HepG2 (cell line): ENCODE measurements at regions of chr14 and their contacts with region 1.

Region 1: GRCh38 chr14:22852940-22853767 is 16.8 kb downstream of the MMP14 start:
- DNase-seq: peak; percentile 86
- ATAC-seq: peak; percentile 88
- H3K4me3 ChIP-seq: peak overlapping the region; percentile 43 to 80 (median 57)
- H3K27ac ChIP-seq: no peak overlapping the region
- H3K4me1 ChIP-seq: peaks cover 42% of the 10 kb centered on the region
- H3K27me3 ChIP-seq: peaks cover 7 to 30% of the 10 kb centered on the region in 2 experiments; a peak in 4 of 5 replicates
- CTCF ChIP-seq: peak; percentile 98
- EP300 ChIP-seq: no peak
- POLR2A ChIP-seq: no peak
- RAD21 ChIP-seq: peak; percentile 100

Region 2: DNA sequence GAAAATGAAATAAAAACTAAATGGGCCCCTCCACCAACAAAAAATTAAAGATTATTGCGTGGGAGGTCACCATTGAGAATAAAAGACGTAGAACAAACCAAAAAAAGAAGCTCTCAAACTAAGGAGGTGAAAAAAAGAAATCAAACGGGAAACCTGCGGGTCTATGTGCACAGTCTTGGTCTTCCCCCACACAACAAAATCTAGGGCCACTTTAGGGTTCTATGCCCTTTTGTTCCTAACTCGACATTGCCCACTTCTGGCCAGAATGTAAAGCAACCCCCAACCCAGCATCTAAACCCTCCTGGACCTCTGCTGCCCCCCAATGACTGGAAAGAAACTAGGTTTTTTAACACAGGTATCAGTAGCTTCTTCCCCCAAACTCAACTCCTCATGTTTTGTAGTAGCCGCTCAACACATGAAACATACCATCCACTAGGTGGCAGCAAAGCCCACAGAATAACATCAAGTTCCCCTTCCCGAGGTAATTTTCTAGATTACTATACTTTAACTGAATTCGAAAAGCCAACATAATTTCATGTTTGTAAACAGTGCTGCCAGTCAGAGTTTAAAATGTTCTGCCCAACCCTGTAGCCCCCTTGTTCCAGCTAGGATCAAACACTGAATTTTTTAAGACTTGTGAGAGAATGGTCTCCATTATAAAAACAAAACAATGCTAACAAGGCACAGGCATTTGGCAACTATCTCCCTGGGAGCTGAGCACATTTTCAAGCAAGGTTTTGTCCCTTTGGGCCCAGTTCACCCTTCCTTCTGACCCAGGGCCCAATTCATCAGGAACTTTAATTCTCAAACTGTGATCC is 282.8 kb before region 1 on chr14:
- CTCF ChIA-PET with region 1: interaction called, 58 read pairs
- POLR2A ChIA-PET with region 1: interaction called, 3 read pairs
- in situ Hi-C with region 1: no loop called
- intact Hi-C with region 1: loop called (anchors 1 kb)
- DNase-seq: peak; percentile 98
- ATAC-seq: peak; percentile 86
- H3K4me3 ChIP-seq: no peak overlapping the region
- H3K27ac ChIP-seq: peak overlapping the region; percentile 12
- H3K4me1 ChIP-seq: peaks cover 29% of the 10 kb centered on the region
- H3K27me3 ChIP-seq: no peaks in the 10 kb centered on the region
- CTCF ChIP-seq: peak; percentile 97
- EP300 ChIP-seq: no peak; a peak in 1 of 4 replicates
- POLR2A ChIP-seq: no peak
- RAD21 ChIP-seq: peak; percentile 96

Region 3: DNA sequence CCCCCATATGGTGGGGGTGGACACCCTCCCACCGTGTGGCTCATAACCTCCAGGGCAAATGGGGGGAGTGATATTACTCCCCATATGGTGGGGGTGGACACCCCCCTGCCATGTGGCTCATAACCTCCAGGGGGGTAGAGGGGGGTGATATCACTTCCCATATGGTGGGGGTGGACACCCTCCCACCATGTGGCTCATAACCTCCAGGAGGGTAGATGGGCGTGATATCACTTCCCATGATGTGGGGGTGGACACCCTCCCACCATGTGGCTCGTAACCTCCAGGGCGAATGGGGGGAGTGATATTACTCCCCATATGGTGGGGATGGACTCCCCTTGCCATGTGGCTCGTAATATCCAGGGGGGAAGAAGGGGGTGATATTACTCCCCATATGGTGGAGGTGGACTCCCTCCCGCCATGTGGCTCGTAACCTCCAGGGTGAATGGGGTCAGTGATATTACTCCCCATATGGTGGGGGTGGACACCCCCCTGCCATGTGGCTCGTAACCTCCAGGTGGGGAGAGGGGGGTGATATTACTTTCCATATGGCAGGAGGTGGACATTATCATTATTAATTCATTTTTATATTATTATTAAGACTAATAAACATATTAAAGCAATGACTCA is 137.9 kb before region 1 on chr14:
- CTCF ChIA-PET with region 1: interaction called, 3 read pairs
- POLR2A ChIA-PET with region 1: no interaction called
- in situ Hi-C with region 1: no loop called
- intact Hi-C with region 1: loop called (anchors 2 kb)
- DNase-seq: no peak
- ATAC-seq: no peak; the same call in 2 of the 3 replicates
- H3K4me3 ChIP-seq: no peak overlapping the region
- H3K27ac ChIP-seq: no peak overlapping the region
- H3K4me1 ChIP-seq: peaks cover 13% of the 10 kb centered on the region
- H3K27me3 ChIP-seq: peaks cover 0 to 13% of the 10 kb centered on the region in 2 experiments; a peak in 1 of 5 replicates
- CTCF ChIP-seq: no peak
- EP300 ChIP-seq: no peak
- POLR2A ChIP-seq: no peak
- RAD21 ChIP-seq: no peak

Region 4: GRCh38 chr14:22802860-22803686 is 50.1 kb before region 1 on chr14:
- CTCF ChIA-PET with region 1: no interaction called
- POLR2A ChIA-PET with region 1: no interaction called
- in situ Hi-C with region 1: no loop called
- intact Hi-C with region 1: loop called (anchors 1 kb)
- DNase-seq: no peak
- ATAC-seq: no peak
- H3K4me3 ChIP-seq: no peak overlapping the region
- H3K27ac ChIP-seq: no peak overlapping the region
- H3K4me1 ChIP-seq: peaks cover 18% of the 10 kb centered on the region
- H3K27me3 ChIP-seq: no peaks in the 10 kb centered on the region
- CTCF ChIP-seq: no peak
- EP300 ChIP-seq: no peak
- POLR2A ChIP-seq: no peak
- RAD21 ChIP-seq: no peak

Region 5: DNA sequence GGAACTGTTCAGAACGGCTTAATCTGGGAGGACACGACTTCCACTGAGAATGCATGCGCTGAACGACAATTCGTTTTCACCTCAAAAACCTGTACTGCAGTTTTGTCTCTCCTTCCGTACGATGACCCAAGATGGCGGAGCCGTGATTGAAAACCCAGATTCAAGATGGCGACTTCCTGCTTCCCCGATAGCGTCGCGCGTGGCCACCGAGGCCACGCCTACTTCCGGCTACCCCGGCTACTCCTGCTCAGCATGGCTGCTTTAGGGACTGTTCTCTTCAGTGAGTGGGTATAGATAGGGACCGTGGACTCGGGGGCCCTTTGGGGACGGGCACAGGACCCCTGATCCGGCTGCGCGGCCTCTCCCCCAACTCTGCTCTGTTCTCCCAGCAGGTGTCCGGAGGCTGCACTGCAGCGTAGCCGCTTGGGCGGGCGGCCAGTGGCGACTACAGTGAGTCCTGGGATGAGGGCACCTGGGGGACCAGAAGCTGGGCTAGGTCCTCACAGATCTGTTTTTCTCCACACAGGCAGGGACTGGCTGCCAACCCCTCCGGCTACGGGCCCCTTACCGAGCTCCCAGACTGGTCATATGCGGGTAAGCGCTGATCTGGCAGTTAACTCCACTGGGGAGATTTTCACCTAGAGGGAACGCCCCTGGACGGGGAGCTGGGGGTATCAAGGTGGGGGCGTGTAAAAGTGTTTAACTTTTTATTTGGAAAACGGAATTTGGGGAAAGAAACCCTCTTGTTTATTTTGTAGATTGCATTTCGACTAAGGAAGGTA is 23.3 kb before region 1 on chr14 and contains the start of gene MRPL52:
- CTCF ChIA-PET with region 1: interaction called, 141 read pairs
- POLR2A ChIA-PET with region 1: interaction called, 11 read pairs
- in situ Hi-C with region 1: no loop called
- intact Hi-C with region 1: no loop called
- DNase-seq: peak; percentile 97
- ATAC-seq: peak; percentile 94
- H3K4me3 ChIP-seq: peak within 1 kb of the TSS; percentile 74 to 97 (median 88)
- H3K27ac ChIP-seq: peak within 1 kb of the TSS; percentile 65
- H3K4me1 ChIP-seq: peaks cover 24% of the 10 kb centered on the region
- H3K27me3 ChIP-seq: no peaks in the 10 kb centered on the region; a peak in 1 of 5 replicates
- CTCF ChIP-seq: peak; percentile 37
- EP300 ChIP-seq: peak in 1 of 2 experiments; percentile 69; a peak in 1 of 4 replicates
- POLR2A ChIP-seq: peak; percentile 91 to 97
- RAD21 ChIP-seq: peak; percentile 53; the same call in 1 of the 2 replicates
- total RNA-seq, gene MRPL52: 329 and 420 TPM in 2 replicates

Region 6: GRCh38 chr14:22872033-22872832 is 19.1 kb after region 1 on chr14:
- CTCF ChIA-PET with region 1: interaction called, 11 read pairs
- POLR2A ChIA-PET with region 1: interaction called, 10 read pairs
- in situ Hi-C with region 1: no loop called
- intact Hi-C with region 1: loop called (anchors 1 kb)
- DNase-seq: peak; percentile 84
- ATAC-seq: peak; percentile 62
- H3K4me3 ChIP-seq: peak overlapping the region; percentile 66 to 93 (median 82)
- H3K27ac ChIP-seq: peak overlapping the region; percentile 85
- H3K4me1 ChIP-seq: peaks cover 35% of the 10 kb centered on the region
- H3K27me3 ChIP-seq: no peaks in the 10 kb centered on the region; a peak in 1 of 5 replicates
- CTCF ChIP-seq: peak; percentile 99
- EP300 ChIP-seq: peak in 1 of 2 experiments; percentile 54; a peak in 2 of 4 replicates
- POLR2A ChIP-seq: no peak
- RAD21 ChIP-seq: peak; percentile 68